ENCODE measurements at regions of chr5 and their contacts with region 1.

Region 1: DNA sequence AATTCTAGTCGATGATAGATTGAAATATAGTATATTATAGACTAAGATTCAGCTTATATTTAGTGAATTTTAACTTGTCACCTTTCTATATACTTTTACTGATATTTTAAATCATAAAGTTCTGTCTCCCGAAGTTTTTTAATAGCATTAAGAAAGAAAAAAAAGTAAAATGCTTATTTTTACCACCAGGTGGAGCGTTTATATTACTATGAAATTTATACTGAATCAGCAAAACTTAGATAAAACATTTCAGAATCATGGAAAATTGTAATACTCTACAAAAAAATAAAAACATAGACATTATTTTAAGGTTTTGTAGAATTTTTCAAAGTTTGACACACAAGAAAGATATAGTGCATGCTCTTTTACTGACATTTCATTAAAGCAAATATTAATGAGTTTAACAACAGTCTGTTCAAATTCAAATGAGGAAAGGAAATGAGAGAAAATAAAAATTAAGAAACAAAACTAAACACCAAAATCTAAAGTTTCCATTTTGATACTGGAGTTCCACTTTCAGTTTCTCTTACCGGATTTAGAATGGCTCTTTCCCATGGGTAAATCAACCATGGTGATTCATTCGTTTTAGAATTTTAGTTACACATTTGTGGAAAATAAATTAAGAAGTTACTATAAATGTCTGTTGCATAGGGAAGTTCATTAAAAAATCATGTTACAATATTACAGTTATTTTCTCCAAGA is 1035.3 kb downstream of the CDH12 start:
- DNase-seq: peak; percentile 63
- ATAC-seq: no peak
- H3K4me3 ChIP-seq: no peak overlapping the region
- H3K27ac ChIP-seq: no peak overlapping the region
- H3K4me1 ChIP-seq: peaks cover 10% of the 10 kb centered on the region
- H3K27me3 ChIP-seq: peaks cover 23% of the 10 kb centered on the region
- CTCF ChIP-seq: peak; percentile 74

Region 2: GRCh38 chr5:21895766-21896350 is 78.0 kb after region 1 on chr5:
- CTCF ChIA-PET with region 1: no interaction called
- POLR2A ChIA-PET with region 1: no interaction called
- intact Hi-C with region 1: loop called (anchors 5 kb)
- DNase-seq: no peak
- ATAC-seq: no peak
- H3K4me3 ChIP-seq: no peak overlapping the region
- H3K27ac ChIP-seq: no peak overlapping the region
- H3K4me1 ChIP-seq: no peaks in the 10 kb centered on the region
- H3K27me3 ChIP-seq: peaks cover 71% of the 10 kb centered on the region
- CTCF ChIP-seq: no peak

Region 3: DNA sequence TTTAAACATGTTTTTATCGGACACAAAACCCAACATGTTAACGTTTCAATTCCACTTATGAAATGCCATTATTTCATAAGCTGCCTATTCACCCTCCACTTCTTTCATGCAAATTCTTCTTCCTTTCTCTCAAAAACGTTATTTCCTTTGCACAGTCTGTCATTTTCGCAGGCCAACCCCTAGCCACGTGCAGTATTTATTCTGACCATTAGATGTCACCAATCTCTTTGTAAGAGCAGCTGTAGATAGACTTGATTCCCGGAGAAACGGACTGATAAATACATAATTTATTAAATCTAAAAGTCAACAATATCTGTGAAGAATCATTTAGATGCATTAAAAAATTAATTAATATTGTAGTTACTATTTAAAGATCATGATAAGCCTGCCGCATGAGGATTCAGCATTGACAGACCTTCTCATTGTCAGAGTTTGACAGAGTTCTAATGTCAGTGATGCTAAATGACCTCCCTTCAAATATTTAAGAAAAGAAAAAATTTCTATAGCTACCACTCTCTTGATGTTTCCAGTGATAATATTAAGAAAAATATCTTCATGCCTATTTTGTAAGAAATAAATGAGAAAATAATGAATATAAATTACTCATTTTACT is 101.7 kb after region 1 on chr5:
- CTCF ChIA-PET with region 1: no interaction called
- POLR2A ChIA-PET with region 1: interaction called, 3 read pairs
- intact Hi-C with region 1: loop called (anchors 5 kb)
- DNase-seq: peak; percentile 73
- ATAC-seq: peak; percentile 72
- H3K4me3 ChIP-seq: no peak overlapping the region
- H3K27ac ChIP-seq: no peak overlapping the region
- H3K4me1 ChIP-seq: no peaks in the 10 kb centered on the region
- H3K27me3 ChIP-seq: peaks cover 12% of the 10 kb centered on the region; the same call in 1 of the 2 replicates
- CTCF ChIP-seq: peak; percentile 85

Region 4: DNA sequence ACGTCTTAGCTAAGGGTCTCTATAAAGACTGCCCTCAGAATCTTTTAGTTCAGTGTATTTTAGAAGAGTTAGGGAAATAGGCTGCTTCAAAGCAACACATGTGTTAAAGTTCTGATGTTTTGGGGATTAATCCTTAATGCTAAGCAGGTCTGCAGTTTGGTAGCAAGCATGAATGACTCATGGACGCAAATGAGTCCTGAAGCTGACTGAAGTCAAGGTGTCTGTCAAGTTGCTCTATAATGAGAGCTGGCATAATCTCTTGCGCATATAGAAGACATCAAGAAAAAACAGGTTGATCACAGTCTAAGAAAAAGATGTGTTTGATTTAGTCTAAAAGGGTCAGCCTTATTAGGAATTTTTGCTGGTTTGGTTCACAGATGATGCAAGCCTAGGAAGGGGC is 405.3 kb after region 1 on chr5:
- CTCF ChIA-PET with region 1: interaction called, 3 read pairs
- POLR2A ChIA-PET with region 1: no interaction called
- intact Hi-C with region 1: loop called (anchors 2 kb)
- DNase-seq: no peak
- ATAC-seq: no peak
- H3K4me3 ChIP-seq: no peak overlapping the region
- H3K27ac ChIP-seq: no peak overlapping the region
- H3K4me1 ChIP-seq: no peaks in the 10 kb centered on the region
- H3K27me3 ChIP-seq: peaks cover 23% of the 10 kb centered on the region; the same call in 1 of the 2 replicates
- CTCF ChIP-seq: no peak